ENCODE measurements at regions of chr17 and their contacts with region 1.

Region 1: GRCh38 chr17:74736513-74737298 is at the start of gene RAB37:
- DNase-seq: peak; percentile 62
- ATAC-seq: peak; percentile 17
- H3K4me3 Mint-ChIP-seq: peak within 1 kb of the TSS; percentile 78
- H3K27ac Mint-ChIP-seq: peak within 1 kb of the TSS; percentile 90
- H3K4me1 Mint-ChIP-seq: peaks cover 46% of the 10 kb centered on the region
- H3K27me3 Mint-ChIP-seq: no peaks in the 10 kb centered on the region
- CTCF ChIP-seq: peak; percentile 53
- total RNA-seq, gene RAB37: 6.6 to 6.7 TPM

Region 2: GRCh38 chr17:74677558-74678466 is 58.9 kb before region 1 on chr17:
- CTCF ChIA-PET with region 1: interaction called, 10 read pairs
- POLR2A ChIA-PET with region 1: interaction called, 3 read pairs
- intact Hi-C with region 1: no loop called
- DNase-seq: no peak
- ATAC-seq: no peak
- H3K4me3 Mint-ChIP-seq: no peak overlapping the region
- H3K27ac Mint-ChIP-seq: no peak overlapping the region
- H3K4me1 Mint-ChIP-seq: peaks cover 16% of the 10 kb centered on the region
- H3K27me3 Mint-ChIP-seq: peaks cover 15% of the 10 kb centered on the region
- CTCF ChIP-seq: no peak

Region 3: DNA sequence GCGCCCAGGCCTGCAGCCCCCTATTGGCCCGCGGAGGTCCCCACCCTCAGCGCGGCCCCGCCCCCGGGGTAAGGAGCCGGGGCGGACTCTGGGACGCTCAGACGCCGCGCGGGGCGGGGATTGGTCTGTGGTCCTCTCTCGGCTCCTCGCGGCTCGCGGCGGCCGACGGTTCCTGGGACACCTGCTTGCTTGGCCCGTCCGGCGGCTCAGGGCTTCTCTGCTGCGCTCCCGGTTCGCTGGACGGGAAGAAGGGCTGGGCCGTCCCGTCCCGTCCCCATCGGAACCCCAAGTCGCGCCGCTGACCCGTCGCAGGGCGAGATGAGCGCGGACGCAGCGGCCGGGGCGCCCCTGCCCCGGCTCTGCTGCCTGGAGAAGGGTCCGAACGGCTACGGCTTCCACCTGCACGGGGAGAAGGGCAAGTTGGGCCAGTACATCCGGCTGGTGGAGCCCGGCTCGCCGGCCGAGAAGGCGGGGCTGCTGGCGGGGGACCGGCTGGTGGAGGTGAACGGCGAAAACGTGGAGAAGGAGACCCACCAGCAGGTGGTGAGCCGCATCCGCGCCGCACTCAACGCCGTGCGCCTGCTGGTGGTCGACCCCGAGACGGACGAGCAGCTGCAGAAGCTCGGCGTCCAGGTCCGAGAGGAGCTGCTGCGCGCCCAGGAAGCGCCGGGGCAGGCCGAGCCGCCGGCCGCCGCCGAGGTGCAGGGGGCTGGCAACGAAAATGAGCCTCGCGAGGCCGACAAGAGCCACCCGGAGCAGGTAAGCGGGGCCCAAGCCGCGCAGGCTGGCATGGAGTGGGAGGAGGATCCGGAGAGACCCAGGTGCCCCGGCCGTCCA is 12.0 kb after region 1 on chr17 and contains the start of gene NHERF1:
- CTCF ChIA-PET with region 1: interaction called, 48 read pairs
- POLR2A ChIA-PET with region 1: interaction called, 35 read pairs
- intact Hi-C with region 1: no loop called
- DNase-seq: peak; percentile 94
- ATAC-seq: peak; percentile 89
- H3K4me3 Mint-ChIP-seq: peak within 1 kb of the TSS; percentile 85
- H3K27ac Mint-ChIP-seq: peak within 1 kb of the TSS; percentile 86
- H3K4me1 Mint-ChIP-seq: peaks cover 49% of the 10 kb centered on the region
- H3K27me3 Mint-ChIP-seq: no peaks in the 10 kb centered on the region
- CTCF ChIP-seq: peak; percentile 30
- total RNA-seq, gene NHERF1: 143 to 150 TPM

Region 4: GRCh38 chr17:74770498-74771318 is 34.0 kb after region 1 on chr17:
- CTCF ChIA-PET with region 1: interaction called, 15 read pairs
- POLR2A ChIA-PET with region 1: interaction called, 6 read pairs
- intact Hi-C with region 1: no loop called
- DNase-seq: peak; percentile 78
- ATAC-seq: peak; percentile 88
- H3K4me3 Mint-ChIP-seq: no peak overlapping the region
- H3K27ac Mint-ChIP-seq: peak overlapping the region; percentile 72
- H3K4me1 Mint-ChIP-seq: peaks cover 30% of the 10 kb centered on the region
- H3K27me3 Mint-ChIP-seq: no peaks in the 10 kb centered on the region
- CTCF ChIP-seq: peak; percentile 76

Region 5: GRCh38 chr17:74864866-74865395 is 128.2 kb after region 1 on chr17:
- CTCF ChIA-PET with region 1: interaction called, 13 read pairs
- POLR2A ChIA-PET with region 1: no interaction called
- intact Hi-C with region 1: loop called (anchors 5 kb)
- DNase-seq: peak; percentile 83
- ATAC-seq: peak; percentile 75
- H3K4me3 Mint-ChIP-seq: no peak overlapping the region
- H3K27ac Mint-ChIP-seq: no peak overlapping the region
- H3K4me1 Mint-ChIP-seq: peaks cover 18% of the 10 kb centered on the region
- H3K27me3 Mint-ChIP-seq: peaks cover 17% of the 10 kb centered on the region
- CTCF ChIP-seq: peak; percentile 90

Region 6: DNA sequence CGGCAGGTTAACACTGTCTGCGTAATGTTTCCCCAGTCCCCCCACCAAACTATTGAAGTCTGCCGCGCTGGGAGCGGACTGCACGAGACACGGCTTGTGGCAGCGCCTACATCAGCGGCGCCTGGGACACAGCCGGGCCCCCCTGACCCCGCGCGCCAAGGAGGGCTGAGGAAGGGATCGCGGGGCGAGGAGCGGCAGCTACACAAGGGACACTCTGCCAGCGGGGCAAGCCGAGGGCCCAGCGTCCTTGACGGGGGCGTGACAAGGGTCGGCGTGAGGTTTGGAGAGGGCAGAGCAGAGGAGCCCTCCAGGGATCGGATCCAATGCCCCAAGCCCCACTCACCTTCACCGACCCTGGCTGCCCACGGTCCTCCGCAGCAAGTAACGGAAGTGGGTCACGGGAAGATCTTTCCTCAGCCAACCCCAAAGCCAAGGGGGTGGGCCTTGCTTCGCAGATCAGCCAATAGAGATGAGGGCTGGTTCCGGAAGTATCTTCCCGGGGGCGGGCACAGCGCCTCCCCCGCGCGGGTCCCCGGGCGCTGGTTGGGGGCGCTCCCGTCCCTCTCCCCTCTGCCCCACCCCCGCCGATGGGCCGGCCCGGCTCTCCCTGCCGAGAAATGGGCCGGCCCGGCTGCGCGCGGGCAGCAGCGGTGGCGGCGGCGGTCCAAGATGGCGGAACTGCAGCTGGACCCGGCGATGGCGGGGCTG is 310.0 kb after region 1 on chr17 and contains the starts of genes ATP5PD and KCTD2:
- CTCF ChIA-PET with region 1: no interaction called
- POLR2A ChIA-PET with region 1: no interaction called
- intact Hi-C with region 1: no loop called
- DNase-seq: peak; percentile 96
- ATAC-seq: peak; percentile 95
- H3K4me3 Mint-ChIP-seq: peak within 1 kb of the TSS; percentile 98
- H3K27ac Mint-ChIP-seq: peak within 1 kb of the TSS; percentile 92
- H3K4me1 Mint-ChIP-seq: peaks cover 40% of the 10 kb centered on the region
- H3K27me3 Mint-ChIP-seq: no peaks in the 10 kb centered on the region
- CTCF ChIP-seq: no peak
- total RNA-seq, gene ATP5PD: 177 to 183 TPM
- total RNA-seq, gene KCTD2: 10.5 to 11.4 TPM

Measured in activated CD8-positive, alpha-beta T cell treated with anti-CD3 and anti-CD28 coated beads for 36 hours (primary cell).